Activated naive CD4-positive, alpha-beta T cell treated with anti-CD3 and anti-CD28 coated beads, Interleukin-2, amount 10 ng/mL, durations not matched to agents 7 days and 5 days (primary cell): ENCODE measurements at regions of chr12 and their contacts with region 1.

Region 1: GRCh38 chr12:56029666-56030293 is 8.9 kb downstream of the IKZF4 start:
- DNase-seq: peak; percentile 70
- H3K4me3 Mint-ChIP-seq: no peak overlapping the region
- H3K27ac Mint-ChIP-seq: peak overlapping the region; percentile 6
- H3K4me1 Mint-ChIP-seq: peaks cover 53% of the 10 kb centered on the region
- H3K27me3 Mint-ChIP-seq: no peaks in the 10 kb centered on the region

Region 2: DNA sequence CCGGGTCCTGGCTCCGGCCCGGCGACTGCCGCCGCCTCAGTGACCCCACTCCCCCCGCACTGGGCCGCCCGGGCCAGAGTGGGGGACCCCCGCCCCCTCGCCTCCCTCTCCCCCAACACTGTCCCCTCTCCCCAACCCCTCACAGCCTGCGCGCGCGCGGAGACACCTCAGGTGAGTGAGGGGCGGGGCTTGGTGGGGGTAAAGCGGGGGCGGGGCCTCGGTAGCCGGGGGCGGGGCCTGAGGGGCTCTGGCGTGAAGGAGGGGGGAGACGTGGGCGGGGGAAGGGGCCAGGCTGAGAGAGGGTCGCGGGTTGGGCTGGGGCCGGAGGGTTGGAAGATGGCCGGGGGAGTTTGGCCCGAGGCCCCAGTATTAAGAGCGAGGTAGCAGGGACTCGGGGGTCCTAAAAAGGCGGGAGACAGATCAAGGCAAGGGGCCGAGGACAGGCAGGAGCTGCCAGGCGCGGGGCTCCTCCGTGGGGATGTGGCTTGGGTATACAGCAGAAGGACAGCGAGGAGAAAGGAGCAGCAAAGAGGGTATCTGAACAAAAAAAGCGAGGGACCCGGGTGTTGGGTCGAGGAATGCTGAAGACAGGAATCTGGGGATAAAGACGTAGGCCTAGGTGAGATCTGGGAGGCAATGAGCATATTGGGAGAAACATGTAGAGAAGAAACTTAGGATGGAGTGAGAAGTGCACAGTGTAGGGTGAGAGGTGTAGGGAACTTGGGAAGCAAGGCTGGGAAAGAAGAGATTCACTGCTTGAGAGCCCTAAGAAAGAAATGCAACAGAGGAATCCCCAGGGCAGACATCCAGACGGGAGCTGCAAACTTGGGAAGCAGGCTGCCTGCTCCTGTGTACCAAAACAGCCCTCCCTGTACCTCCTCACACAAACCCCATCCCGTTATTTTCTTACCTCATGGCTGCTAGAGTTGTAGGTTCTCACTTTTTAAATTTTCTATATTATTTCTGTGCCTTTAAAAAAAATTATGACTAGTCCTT is 21.9 kb before region 1 on chr12:
- CTCF ChIA-PET with region 1: interaction called, 12 read pairs
- DNase-seq: peak; percentile 79
- H3K4me3 Mint-ChIP-seq: peak overlapping the region; percentile 77
- H3K27ac Mint-ChIP-seq: peak overlapping the region; percentile 40
- H3K4me1 Mint-ChIP-seq: peaks cover 36% of the 10 kb centered on the region
- H3K27me3 Mint-ChIP-seq: peaks cover 15% of the 10 kb centered on the region

Region 3: DNA sequence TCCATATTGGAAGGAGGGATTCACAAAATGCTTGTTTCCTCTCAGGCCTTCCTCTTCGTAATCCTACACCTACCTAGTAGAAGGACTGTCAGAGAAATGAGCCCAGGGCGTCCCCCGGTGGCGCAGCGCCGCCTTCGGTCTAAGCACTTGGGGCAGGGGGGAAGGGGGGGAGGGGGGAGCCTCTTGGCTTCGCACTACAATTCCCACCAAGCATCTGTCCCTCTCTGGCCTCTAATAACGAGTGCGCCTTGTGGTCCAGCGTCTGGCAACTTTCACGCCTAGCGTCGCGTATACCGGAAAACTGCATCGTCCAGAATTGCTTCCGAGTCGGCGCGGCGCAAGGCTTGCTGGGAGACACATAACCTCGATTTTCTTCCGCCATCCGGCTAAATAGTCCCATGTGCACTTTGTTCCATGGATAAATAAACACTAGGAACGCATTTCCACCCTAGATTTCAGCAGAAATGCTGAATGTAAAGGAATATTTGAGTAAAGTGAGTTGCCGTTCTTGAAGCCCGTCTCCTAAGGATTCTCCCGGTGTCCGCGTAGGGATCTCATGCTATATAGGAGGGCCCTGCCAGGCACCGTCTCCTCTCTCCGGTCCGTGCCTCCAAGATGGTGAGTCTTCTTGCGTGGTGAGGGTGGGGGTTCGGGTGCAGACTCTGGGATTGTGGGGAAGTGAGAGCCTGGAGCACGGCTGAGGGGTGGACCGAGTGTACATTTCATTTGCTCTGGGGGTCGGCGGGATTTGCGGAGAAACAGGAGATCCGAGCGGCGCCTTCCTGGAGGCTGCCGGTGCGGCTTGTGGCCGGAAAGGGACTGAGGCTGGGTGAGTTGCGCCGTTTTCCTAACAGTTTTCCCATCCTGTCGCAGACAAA is 12.0 kb after region 1 on chr12 and contains the start of gene RPS26:
- CTCF ChIA-PET with region 1: interaction called, 13 read pairs
- DNase-seq: peak; percentile 95
- H3K4me3 Mint-ChIP-seq: peak within 1 kb of the TSS; percentile 92
- H3K27ac Mint-ChIP-seq: peak within 1 kb of the TSS; percentile 91
- H3K4me1 Mint-ChIP-seq: peaks cover 54% of the 10 kb centered on the region
- H3K27me3 Mint-ChIP-seq: peaks cover 3% of the 10 kb centered on the region